Ovary (tissue), 10 donors: ENCODE measurements at regions of chr20 and their contacts with region 1.

Region 1: GRCh38 chr20:40962730-40963504 is 65.7 kb upstream of the TOP1 start:
- DNase-seq: peak; percentile 45 to 79 (median 69)
- H3K4me3 ChIP-seq: no peak overlapping the region
- H3K27ac ChIP-seq: no peak overlapping the region
- H3K4me1 ChIP-seq: peaks cover 1% of the 10 kb centered on the region
- H3K27me3 ChIP-seq: no peaks in the 10 kb centered on the region
- CTCF ChIP-seq: peak; percentile 71 to 91 (median 72)
- EP300 ChIP-seq: no peak
- POLR2A ChIP-seq: no peak

Region 2: DNA sequence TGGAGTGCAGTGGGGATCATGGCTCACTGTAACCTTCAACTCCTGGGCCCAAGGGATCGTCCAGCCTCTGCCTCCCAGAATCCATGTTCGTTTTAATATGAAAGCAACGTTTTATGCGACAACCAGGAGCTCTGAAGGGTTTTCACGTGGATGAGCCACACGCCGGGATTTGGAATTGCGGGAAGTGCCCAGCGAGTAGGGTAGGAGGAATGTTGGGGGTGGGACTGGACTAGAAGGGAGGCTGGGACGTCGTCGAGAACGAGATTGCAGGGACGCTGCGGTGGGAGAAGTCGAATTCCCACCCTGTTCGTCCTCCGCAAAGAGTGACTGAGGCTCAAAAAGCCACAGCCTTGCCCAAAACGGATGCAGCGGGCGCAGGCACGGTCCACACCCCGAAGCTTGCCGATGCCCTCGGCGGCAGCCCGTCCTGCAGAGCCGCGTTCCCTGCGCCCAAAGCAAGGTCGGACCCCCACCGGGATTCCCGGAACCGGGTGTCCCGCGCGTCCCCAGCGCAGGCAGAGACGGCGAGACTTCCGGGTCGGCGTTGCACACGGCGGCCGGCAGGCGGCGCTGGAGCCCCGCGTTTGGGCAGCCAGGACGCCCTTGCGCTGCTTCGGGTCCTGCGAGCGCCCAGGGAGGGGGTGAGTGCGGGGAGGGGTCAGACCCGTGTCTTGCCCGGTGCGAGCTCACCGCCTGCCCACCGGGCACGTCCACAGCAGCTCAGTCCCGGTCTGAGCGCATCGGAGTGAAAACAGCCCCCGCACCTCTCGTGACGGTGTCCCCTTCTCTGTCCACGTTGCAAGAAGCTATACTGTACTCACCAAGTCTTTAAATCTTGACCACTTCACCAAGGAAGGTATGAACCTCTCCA is 1913.0 kb before region 1 on chr20:
- intact Hi-C with region 1: loop called in 2 of 4 experiments (anchors 10 kb)
- DNase-seq: peak; percentile 63 to 84 (median 73)
- H3K4me3 ChIP-seq: peak overlapping the region; percentile 71
- H3K27ac ChIP-seq: no peak overlapping the region
- H3K4me1 ChIP-seq: no peaks in the 10 kb centered on the region
- H3K27me3 ChIP-seq: no peaks in the 10 kb centered on the region
- CTCF ChIP-seq: peak; percentile 86 to 92 (median 90)
- EP300 ChIP-seq: no peak
- POLR2A ChIP-seq: no peak

Region 3: GRCh38 chr20:40806929-40807820 is 155.7 kb before region 1 on chr20:
- intact Hi-C with region 1: loop called in 1 of 4 experiments (anchors 5 kb)
- DNase-seq: no peak
- H3K4me3 ChIP-seq: no peak overlapping the region
- H3K27ac ChIP-seq: no peak overlapping the region
- H3K4me1 ChIP-seq: no peaks in the 10 kb centered on the region
- H3K27me3 ChIP-seq: no peaks in the 10 kb centered on the region
- CTCF ChIP-seq: no peak
- EP300 ChIP-seq: no peak
- POLR2A ChIP-seq: no peak

Region 4: GRCh38 chr20:41095110-41095969 is 132.4 kb after region 1 on chr20:
- intact Hi-C with region 1: loop called in 2 of 4 experiments (anchors 2 to 10 kb)
- DNase-seq: peak; percentile 22 to 74 (median 61)
- H3K4me3 ChIP-seq: no peak overlapping the region
- H3K27ac ChIP-seq: no peak overlapping the region
- H3K4me1 ChIP-seq: no peaks in the 10 kb centered on the region
- H3K27me3 ChIP-seq: no peaks in the 10 kb centered on the region
- CTCF ChIP-seq: peak; percentile 61 to 75 (median 64)
- EP300 ChIP-seq: no peak
- POLR2A ChIP-seq: no peak